ENCODE measurements at regions of chr2 and their contacts with region 1.

Region 1: DNA sequence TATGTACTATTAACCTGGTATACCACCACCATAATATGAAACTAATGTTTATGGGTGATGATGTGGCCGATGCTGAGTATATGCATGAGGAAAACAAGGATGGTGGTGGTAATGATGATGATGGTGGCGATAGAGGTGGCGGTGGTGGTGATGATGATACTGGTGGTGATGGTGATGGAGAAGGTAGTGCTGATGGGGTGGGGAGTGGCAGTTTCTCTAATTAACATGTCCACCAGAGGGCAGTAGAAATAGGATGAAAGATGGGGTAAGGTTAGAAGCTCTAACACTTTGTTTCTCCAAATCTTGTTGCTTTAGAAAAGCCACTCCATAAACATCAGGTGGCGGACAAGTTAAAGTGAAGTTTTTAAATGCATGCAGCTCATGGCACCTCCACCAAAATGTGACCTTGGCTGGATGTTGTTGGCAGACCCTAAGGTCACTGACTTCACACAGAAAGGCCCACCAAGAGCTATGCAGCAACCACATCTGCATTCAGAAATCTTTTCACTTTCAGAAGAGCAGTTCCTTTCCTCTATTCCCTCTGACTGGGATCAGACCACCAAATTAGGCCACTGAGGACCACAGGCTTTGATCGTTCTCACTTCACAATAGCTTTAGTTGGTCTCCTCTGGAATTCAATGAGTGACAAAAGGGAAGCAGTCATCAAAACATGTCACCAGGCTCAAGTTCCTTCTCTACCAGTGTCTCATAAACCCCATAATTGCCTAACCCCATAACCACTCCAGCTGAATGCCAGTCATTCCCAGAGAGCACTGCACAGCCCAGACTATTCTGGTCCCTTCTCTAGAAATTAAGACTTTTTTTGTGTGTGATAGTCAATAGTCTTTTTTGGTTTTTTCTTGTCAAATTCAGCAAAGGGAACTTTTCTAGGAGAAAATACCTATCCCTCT is 7.5 kb upstream of the BCL11A start:
- DNase-seq: no peak
- ATAC-seq: peak; percentile 93
- H3K4me3 ChIP-seq: no peak overlapping the region
- H3K27ac ChIP-seq: no peak overlapping the region
- H3K4me1 ChIP-seq: peaks cover 4% of the 10 kb centered on the region
- H3K27me3 ChIP-seq: peaks cover 0 to 3% of the 10 kb centered on the region in 2 experiments; a peak in 2 of 4 replicates
- CTCF ChIP-seq: peak; percentile 36 to 57 (median 57); a peak in 5 of 6 replicates
- EP300 ChIP-seq: no peak
- POLR2A ChIP-seq: no peak
- RAD21 ChIP-seq: no peak

Region 2: DNA sequence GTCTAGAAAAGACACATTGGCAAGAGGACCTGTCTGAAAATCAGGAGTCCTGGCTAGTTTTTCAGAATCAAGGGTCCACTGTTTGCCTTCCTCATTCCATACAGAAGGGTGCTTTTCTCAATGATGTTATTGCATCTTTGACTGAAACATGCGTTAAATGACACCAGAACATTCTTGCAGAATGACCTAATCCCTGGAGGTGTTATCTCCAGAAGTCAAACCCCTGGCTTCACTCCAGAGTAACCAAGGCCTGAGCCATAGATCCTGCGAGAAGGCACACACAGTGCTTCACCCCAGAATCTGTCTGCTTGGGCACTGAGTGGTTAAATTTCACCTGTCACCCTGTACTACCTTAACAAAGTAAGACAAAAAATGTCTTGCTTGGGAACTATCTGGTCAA is 1264.7 kb before region 1 on chr2:
- CTCF ChIA-PET with region 1: interaction called, 4 read pairs
- POLR2A ChIA-PET with region 1: no interaction called
- RAD21 ChIA-PET with region 1: no interaction called
- SMC1A ChIA-PET with region 1: no interaction called
- in situ Hi-C with region 1: loop called (anchors 5 kb)
- intact Hi-C with region 1: no loop called
- DNase-seq: no peak
- ATAC-seq: no peak
- H3K4me3 ChIP-seq: no peak overlapping the region
- H3K27ac ChIP-seq: no peak overlapping the region
- H3K4me1 ChIP-seq: no peaks in the 10 kb centered on the region
- H3K27me3 ChIP-seq: no peaks in the 10 kb centered on the region
- CTCF ChIP-seq: no peak
- EP300 ChIP-seq: no peak
- POLR2A ChIP-seq: no peak
- RAD21 ChIP-seq: no peak

Region 3: DNA sequence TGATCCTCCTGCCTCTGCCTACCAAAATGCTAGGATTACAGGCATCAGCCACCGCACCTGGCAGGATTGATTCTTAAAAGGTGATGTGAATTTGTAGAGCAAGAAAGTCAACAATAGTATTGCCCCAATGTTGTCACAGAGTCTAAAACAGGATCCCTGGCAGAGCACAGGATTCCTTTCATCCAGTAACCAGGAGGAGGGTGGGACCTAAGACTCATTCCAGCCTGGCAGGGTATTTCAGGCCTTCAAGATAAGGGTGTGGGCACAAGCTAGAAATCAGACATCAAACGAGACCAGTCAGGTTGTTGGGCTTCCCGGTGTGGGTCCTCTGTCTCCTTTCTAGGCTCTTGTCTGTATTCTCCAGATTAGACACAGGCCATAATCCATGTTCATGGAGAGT is 519.0 kb before region 1 on chr2:
- CTCF ChIA-PET with region 1: no interaction called
- POLR2A ChIA-PET with region 1: no interaction called
- RAD21 ChIA-PET with region 1: no interaction called
- SMC1A ChIA-PET with region 1: no interaction called
- in situ Hi-C with region 1: no loop called
- intact Hi-C with region 1: no loop called
- DNase-seq: no peak
- ATAC-seq: no peak
- H3K4me3 ChIP-seq: no peak overlapping the region
- H3K27ac ChIP-seq: no peak overlapping the region
- H3K4me1 ChIP-seq: no peaks in the 10 kb centered on the region
- H3K27me3 ChIP-seq: no peaks in the 10 kb centered on the region
- CTCF ChIP-seq: no peak
- EP300 ChIP-seq: no peak
- POLR2A ChIP-seq: no peak
- RAD21 ChIP-seq: no peak

Region 4: GRCh38 chr2:60163691-60164090 is 397.3 kb before region 1 on chr2:
- CTCF ChIA-PET with region 1: no interaction called
- POLR2A ChIA-PET with region 1: no interaction called
- RAD21 ChIA-PET with region 1: no interaction called
- SMC1A ChIA-PET with region 1: no interaction called
- in situ Hi-C with region 1: no loop called
- intact Hi-C with region 1: loop called (anchors 5 kb)
- DNase-seq: no peak
- ATAC-seq: no peak
- H3K4me3 ChIP-seq: no peak overlapping the region
- H3K27ac ChIP-seq: no peak overlapping the region
- H3K4me1 ChIP-seq: peaks cover 8% of the 10 kb centered on the region
- H3K27me3 ChIP-seq: no peaks in the 10 kb centered on the region
- CTCF ChIP-seq: no peak
- EP300 ChIP-seq: no peak
- POLR2A ChIP-seq: no peak
- RAD21 ChIP-seq: no peak

Region 5: GRCh38 chr2:60581433-60582282 is 20.7 kb after region 1 on chr2:
- CTCF ChIA-PET with region 1: interaction called, 49 read pairs
- POLR2A ChIA-PET with region 1: no interaction called
- RAD21 ChIA-PET with region 1: interaction called, 8 read pairs
- SMC1A ChIA-PET with region 1: interaction called, 6 read pairs
- in situ Hi-C with region 1: no loop called
- intact Hi-C with region 1: no loop called
- DNase-seq: no peak
- ATAC-seq: peak; percentile 99
- H3K4me3 ChIP-seq: no peak overlapping the region
- H3K27ac ChIP-seq: no peak overlapping the region
- H3K4me1 ChIP-seq: no peaks in the 10 kb centered on the region
- H3K27me3 ChIP-seq: no peaks in the 10 kb centered on the region; a peak in 3 of 4 replicates
- CTCF ChIP-seq: peak; percentile 93 to 94 (median 94); a peak in 5 of 6 replicates
- EP300 ChIP-seq: no peak
- POLR2A ChIP-seq: no peak
- RAD21 ChIP-seq: peak; percentile 90

Region 6: DNA sequence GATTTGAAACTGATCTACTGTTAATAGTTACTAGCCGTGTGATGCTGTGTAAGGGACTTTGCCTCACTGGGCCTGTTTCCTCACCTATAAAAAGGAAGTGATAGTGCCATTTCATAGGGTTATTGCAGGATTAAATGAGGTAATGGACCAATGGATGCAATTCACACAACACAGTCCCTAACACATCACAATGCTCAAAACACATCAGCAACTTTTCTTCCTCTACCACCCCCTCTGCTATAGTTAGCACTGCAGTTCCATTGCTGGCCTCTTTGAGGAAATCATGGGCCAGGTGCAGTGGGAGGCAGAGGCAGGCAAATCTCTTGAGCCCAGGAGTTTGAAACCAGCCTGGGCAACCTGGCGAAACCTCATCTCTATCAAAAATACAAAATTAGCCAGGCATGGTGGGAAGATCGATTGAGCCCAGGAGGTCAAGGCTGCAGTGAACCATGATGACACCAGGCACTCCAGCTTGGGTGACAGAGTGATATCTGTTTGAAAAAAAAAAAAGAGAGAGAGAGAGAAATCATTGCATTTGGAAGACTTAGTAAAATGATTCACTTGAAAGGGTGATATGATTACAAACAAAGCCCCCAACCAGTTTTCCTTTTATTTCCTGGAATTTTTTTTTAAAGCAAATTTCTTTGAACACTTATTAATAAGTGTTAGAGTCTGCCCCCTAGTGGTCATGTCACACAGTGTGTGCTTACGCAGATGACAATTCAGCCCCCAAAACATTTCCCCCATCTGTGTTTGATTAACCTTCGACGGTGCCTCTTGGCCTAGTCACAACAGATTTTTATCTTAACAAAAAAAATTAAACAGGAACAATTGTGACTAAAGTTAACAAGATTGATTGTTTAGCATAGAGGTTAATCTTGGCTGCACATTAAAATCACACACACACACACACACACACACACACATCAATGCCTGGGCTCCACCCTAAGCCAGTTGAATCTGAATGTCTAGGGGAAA is 81.1 kb after region 1 on chr2:
- CTCF ChIA-PET with region 1: interaction called, 8 read pairs
- POLR2A ChIA-PET with region 1: no interaction called
- RAD21 ChIA-PET with region 1: interaction called, 3 read pairs
- SMC1A ChIA-PET with region 1: no interaction called
- in situ Hi-C with region 1: no loop called
- intact Hi-C with region 1: loop called (anchors 2 kb)
- DNase-seq: no peak
- ATAC-seq: peak; percentile 93
- H3K4me3 ChIP-seq: no peak overlapping the region
- H3K27ac ChIP-seq: no peak overlapping the region
- H3K4me1 ChIP-seq: peaks cover 2% of the 10 kb centered on the region; the same call in 1 of the 2 replicates
- H3K27me3 ChIP-seq: peaks cover 0 to 5% of the 10 kb centered on the region in 2 experiments; a peak in 2 of 4 replicates
- CTCF ChIP-seq: peak; percentile 55 to 78 (median 69)
- EP300 ChIP-seq: no peak
- POLR2A ChIP-seq: no peak
- RAD21 ChIP-seq: peak; percentile 38; the same call in 1 of the 2 replicates

Region 7: DNA sequence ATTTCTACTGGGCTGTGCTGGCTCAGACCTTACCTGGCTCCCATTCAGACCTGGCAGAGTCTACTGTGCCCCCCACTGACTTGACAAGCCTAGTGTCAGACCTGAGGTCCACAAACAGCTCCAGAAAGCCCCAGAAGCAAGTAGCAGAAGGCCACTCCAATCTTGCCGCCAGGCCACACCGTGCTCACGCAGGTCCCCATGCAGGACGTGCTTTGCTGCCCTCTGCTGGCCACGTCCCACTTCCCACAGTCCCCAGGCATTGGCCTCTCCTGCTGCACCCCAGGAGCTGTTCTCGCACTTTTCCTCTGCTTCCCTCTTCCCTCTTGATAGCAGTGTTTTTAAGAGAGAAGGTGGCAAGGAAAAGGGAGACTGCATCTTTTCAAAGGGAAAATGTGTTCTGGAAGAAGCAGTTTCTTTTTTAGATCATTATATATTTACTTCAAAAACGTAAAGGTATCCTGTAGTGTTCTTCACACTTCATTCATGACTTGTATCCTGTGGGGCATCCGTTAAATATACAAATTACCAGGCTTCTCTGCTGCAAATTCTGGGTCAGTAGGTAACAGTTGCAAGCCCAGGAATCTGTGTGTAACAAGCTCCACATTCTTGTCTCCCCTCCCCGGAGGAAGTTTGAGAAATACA is 113.7 kb after region 1 on chr2:
- CTCF ChIA-PET with region 1: interaction called, 34 read pairs
- POLR2A ChIA-PET with region 1: no interaction called
- RAD21 ChIA-PET with region 1: no interaction called
- SMC1A ChIA-PET with region 1: interaction called, 3 read pairs
- in situ Hi-C with region 1: no loop called
- intact Hi-C with region 1: loop called (anchors 5 kb)
- DNase-seq: peak; percentile 19
- ATAC-seq: peak; percentile 100
- H3K4me3 ChIP-seq: no peak overlapping the region
- H3K27ac ChIP-seq: no peak overlapping the region
- H3K4me1 ChIP-seq: peaks cover 3% of the 10 kb centered on the region; the same call in 1 of the 2 replicates
- H3K27me3 ChIP-seq: no peaks in the 10 kb centered on the region
- CTCF ChIP-seq: peak; percentile 95 to 98 (median 98)
- EP300 ChIP-seq: no peak
- POLR2A ChIP-seq: no peak
- RAD21 ChIP-seq: peak; percentile 69